ENCODE measurements at regions of chr10 and their contacts with region 1.

Region 1: GRCh38 chr10:50508315-50509051 is 115.3 kb downstream of the SGMS1 start:
- DNase-seq: no peak

Region 2: DNA sequence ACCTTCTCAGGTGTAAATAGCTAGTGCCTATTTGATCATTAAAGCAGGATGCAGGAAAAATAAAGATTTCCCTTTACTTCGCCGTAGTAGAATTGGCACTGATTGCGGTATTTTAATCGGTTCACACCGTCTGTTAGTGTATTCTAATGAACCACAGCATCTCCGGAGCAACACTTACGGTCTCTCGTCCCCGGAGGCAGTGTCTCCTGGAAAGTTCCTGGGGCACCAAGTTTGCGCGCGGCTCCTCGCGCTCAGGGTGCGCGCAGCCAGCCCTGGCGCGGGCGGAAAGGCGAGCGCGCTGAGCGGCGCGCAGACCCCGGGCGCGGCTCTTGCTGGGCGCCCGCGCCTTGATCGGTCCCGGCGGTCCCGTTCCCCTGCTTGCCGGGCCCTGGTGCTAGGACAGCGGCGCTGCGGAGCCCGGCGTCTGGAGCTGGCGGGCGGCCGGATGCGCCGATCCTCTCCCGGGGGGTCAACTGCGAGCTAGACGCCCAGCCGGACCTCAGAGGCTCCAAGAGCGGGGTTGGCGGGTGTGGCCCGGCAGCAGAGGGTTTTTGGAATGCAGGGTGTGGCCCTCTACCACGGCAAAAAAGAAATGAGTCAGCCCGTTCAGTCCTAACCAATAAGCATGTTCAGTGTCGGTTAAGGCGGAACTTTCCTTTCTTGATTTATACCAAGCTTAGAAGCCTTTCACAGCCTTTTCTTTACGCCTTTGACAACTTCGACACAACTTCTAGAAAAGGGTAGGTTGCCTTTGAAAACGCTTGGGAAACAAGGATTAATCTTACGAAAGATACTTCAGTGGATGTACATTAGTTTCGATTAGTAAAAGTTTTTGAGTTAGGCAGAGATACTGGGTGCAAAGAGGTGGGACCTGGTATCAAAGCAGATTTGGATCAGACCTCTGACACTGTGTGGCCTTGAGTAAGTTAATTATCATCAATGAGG is 90.3 kb before region 1 on chr10:
- intact Hi-C with region 1: loop called (anchors 10 kb)
- DNase-seq: peak in 40 of 42 donors; percentile 15 to 81 (median 62)

Region 3: DNA sequence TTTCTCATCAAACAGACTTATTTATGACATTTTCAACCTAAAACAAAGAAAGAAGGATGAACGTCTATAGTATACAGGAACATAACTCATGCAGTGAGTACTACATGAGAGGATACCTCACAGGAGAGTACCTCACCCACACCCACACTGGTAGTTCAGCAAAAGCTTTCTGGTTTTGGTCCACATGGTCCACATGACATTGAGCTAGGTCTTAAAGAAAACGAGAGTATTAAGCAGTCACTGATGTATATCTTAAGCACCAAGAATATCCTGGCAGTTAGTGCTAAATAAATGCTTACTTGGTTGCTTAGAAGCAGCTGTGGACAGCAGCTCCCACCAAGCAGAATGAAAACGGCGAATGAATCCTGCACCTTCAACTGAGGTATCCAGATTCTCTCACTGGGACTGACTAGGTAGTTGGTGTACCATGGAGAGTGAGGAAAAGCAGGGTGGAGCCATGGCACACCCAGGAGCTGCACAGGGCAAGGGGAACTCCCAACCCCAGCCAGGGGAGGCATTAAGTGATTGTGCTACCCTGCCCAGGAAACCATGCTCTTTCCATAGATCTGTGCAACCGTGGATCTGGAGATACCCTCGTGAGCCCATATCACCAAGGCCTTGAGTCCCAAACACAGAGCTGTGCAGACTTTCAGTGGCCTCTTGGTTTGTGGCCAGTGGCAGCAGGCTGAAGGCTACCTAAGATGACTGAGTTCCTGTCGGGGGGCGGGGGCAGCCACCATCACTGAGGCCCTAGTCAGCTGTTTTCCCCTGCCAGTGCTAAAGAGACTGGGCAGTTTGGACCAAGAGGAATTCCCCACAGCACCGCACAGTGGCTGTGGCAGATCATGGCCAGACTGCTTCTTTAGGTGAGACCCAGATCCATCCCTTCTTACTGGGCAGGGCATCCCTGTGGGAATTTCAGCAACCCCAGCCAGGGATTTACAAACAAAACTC is 28.2 kb before region 1 on chr10:
- intact Hi-C with region 1: no loop called
- DNase-seq: no peak

Measured in head of caudate nucleus (tissue), 42 donors.